ENCODE measurements at regions of chr12 and their contacts with region 1.

Region 1: GRCh38 chr12:103698752-103699560 is 111.9 kb downstream of the STAB2 start:
- DNase-seq: no peak
- ATAC-seq: no peak
- H3K4me3 ChIP-seq: no peak overlapping the region
- H3K27ac ChIP-seq: no peak overlapping the region
- H3K4me1 ChIP-seq: no peaks in the 10 kb centered on the region
- H3K27me3 ChIP-seq: no peaks in the 10 kb centered on the region; the same call in none of the 2 replicates
- CTCF ChIP-seq: no peak
- POLR2A ChIP-seq: no peak
- RAD21 ChIP-seq: no peak

Region 2: DNA sequence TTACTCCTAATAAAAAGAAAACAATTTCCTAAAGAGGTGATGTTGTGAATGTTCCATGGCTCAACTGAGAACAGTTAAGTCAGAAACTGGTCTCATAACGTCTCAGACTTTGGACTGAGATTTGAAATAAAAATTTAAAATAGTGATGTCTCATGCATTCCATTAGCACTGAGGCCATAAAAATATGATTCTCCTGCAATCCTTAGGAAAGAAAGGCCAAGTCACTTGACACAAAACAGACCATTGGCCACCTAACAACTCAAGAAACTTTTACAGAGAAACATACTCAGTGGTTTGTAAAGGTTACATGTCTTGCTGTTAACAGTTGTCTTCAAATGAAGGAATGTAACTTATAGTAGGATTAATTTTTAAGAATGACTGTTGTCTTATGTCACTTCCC is 53.8 kb before region 1 on chr12:
- CTCF ChIA-PET with region 1: no interaction called
- POLR2A ChIA-PET with region 1: no interaction called
- dilution Hi-C with region 1: no loop called
- in situ Hi-C with region 1: no loop called
- intact Hi-C with region 1: loop called (anchors 1 kb)
- DNase-seq: peak; percentile 33
- ATAC-seq: no peak
- H3K4me3 ChIP-seq: no peak overlapping the region
- H3K27ac ChIP-seq: no peak overlapping the region
- H3K4me1 ChIP-seq: no peaks in the 10 kb centered on the region
- H3K27me3 ChIP-seq: no peaks in the 10 kb centered on the region; the same call in 1 of the 2 replicates
- CTCF ChIP-seq: no peak
- POLR2A ChIP-seq: no peak
- RAD21 ChIP-seq: no peak

Measured in IMR-90 (cell line).